ENCODE measurements at regions of chr3 and their contacts with region 1.

Region 1: DNA sequence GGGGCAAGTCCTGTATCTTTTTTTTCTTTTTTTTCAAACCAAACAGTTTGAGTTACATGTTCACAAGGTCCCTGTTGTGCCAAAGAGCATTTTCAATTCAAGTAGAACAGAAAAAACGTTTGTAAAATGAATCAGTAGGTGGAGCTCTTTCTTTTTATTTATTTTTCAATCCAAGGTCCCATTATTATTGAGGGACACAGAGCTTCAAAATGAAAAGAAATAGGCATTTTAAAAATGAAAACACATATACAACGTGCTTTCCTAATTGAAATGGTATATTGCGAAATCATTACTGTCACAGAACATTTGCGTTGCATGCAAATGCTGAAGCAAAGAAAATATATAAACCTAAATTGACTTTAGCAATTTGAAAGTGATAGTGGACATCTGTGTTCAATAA is 711.0 kb downstream of the MECOM start:
- DNase-seq: no peak
- H3K4me3 ChIP-seq: peak overlapping the region in 1 of 4 donors; percentile 24
- H3K27ac ChIP-seq: no peak overlapping the region
- H3K4me1 ChIP-seq: peaks cover 0 to 22% (median 7%) of the 10 kb centered on the region in 4 donors
- H3K27me3 ChIP-seq: no peaks in the 10 kb centered on the region
- CTCF ChIP-seq: peak in 1 of 4 experiments; percentile 25
- EP300 ChIP-seq: no peak
- POLR2A ChIP-seq: no peak

Region 2: DNA sequence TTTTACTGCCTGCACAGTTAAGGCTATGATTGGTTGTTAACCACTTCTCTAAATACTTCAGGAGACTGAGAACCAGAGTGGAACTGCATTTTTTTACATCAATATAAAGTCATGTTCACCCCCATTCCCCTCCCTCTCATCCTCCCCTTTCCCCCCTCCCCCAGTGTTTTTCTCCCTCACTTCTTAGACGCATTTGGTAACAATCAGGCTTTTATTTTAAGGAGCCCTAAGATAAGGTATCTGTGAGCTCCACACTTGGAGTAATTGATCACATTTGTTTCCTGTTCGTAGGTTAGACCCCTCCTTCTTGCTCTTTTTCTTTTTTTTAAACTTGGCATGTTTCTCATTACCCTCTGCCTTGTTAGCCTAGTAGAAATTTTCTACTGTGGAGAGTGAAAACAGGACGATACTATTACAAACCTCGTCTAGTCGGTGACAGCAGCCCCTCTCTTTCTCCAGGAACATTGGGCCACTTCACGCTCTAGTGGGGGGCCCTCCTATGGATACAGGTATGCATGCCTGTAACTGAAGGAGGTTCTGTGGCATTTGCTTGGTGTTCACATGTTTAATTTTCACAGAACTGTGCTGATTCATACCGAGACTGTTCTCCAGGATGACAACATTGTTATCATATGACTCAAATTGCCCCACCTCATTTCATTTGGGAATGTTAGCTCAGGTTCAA is 396.5 kb after region 1 on chr3:
- intact Hi-C with region 1: loop called (anchors 10 kb)
- DNase-seq: no peak
- H3K4me3 ChIP-seq: no peak overlapping the region
- H3K27ac ChIP-seq: no peak overlapping the region
- H3K4me1 ChIP-seq: no peaks in the 10 kb centered on the region
- H3K27me3 ChIP-seq: no peaks in the 10 kb centered on the region
- CTCF ChIP-seq: no peak
- EP300 ChIP-seq: no peak
- POLR2A ChIP-seq: no peak

Measured in sigmoid colon (tissue), 7 donors.